ENCODE measurements at regions of chr12 and their contacts with region 1.

Region 1: DNA sequence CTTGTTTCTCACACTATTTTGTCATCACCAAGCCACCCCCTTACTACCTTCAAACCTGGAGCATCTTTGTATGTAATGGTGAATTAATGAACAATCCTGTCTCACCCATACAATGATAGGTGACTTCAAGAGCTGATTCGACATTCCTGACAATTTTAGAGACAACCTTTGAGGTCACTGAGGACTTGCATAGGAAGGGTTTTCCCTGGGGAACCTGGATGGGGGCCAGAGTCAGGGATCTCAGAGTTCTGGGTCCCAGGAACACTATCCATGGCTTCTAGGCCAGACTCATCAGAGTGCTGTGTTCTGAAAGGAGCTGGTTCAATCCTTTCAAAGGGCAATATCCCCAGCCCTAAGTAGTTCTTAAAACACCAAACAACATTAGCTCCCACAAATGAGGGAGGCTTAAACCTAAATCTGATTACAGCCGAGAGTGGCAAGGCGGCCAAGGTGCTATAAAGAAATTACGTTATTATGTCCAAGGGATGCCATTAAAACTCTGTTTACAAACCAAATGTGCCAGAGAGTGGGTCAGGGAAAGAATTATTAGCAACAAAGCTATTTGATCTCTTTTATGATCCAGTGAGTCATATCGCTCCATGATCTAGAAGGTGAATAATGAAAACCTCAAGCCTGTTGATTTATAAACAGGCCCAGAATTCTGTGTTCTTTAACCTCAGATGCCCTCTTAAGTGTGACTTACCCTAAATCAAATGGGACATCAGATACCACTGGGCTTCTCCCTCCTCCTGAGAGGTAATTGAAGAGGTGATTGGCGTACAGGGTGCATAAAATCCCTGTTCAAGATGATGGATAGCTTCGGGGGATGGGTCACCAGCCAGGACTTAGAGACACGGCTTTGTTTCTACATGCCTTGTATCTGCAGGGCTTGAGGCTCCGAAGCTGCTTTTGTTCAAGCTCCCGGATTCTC is 230.2 kb upstream of the TBX3 start:
- DNase-seq: no peak
- ATAC-seq: peak; percentile 61 to 93 (median 79)
- H3K4me3 ChIP-seq: no peak overlapping the region
- H3K27ac ChIP-seq: peak overlapping the region; percentile 23
- H3K4me1 ChIP-seq: no peaks in the 10 kb centered on the region
- H3K27me3 ChIP-seq: peaks cover 0 to 2% (median 0%) of the 10 kb centered on the region in 3 donors
- CTCF ChIP-seq: no peak

Region 2: GRCh38 chr12:114895827-114896226 is 18.3 kb before region 1 on chr12:
- intact Hi-C with region 1: no loop called
- DNase-seq: no peak
- ATAC-seq: no peak
- H3K4me3 ChIP-seq: no peak overlapping the region
- H3K27ac ChIP-seq: no peak overlapping the region
- H3K4me1 ChIP-seq: no peaks in the 10 kb centered on the region
- H3K27me3 ChIP-seq: peaks cover 0 to 3% (median 0%) of the 10 kb centered on the region in 3 donors
- CTCF ChIP-seq: no peak

Region 3: GRCh38 chr12:114967151-114967550 is 53.0 kb after region 1 on chr12:
- intact Hi-C with region 1: loop called in 1 of 2 experiments (anchors 5 kb)
- DNase-seq: no peak
- ATAC-seq: no peak
- H3K4me3 ChIP-seq: no peak overlapping the region
- H3K27ac ChIP-seq: no peak overlapping the region
- H3K4me1 ChIP-seq: no peaks in the 10 kb centered on the region
- H3K27me3 ChIP-seq: peaks cover 0 to 4% (median 0%) of the 10 kb centered on the region in 3 donors
- CTCF ChIP-seq: no peak

Measured in psoas muscle (tissue), 8 donors.